ENCODE measurements at regions of chr1 and their contacts with region 1.

Region 1: GRCh38 chr1:236603991-236604904 is at the start of gene HEATR1:
- DNase-seq: peak; percentile 96
- H3K4me3 Mint-ChIP-seq: peak within 1 kb of the TSS; percentile 89
- H3K27ac Mint-ChIP-seq: peak within 1 kb of the TSS; percentile 91
- H3K4me1 Mint-ChIP-seq: peaks cover 9% of the 10 kb centered on the region
- H3K27me3 Mint-ChIP-seq: no peaks in the 10 kb centered on the region
- CTCF ChIP-seq: no peak
- total RNA-seq, gene HEATR1: 70.4 and 75.5 TPM in 2 replicates

Region 2: DNA sequence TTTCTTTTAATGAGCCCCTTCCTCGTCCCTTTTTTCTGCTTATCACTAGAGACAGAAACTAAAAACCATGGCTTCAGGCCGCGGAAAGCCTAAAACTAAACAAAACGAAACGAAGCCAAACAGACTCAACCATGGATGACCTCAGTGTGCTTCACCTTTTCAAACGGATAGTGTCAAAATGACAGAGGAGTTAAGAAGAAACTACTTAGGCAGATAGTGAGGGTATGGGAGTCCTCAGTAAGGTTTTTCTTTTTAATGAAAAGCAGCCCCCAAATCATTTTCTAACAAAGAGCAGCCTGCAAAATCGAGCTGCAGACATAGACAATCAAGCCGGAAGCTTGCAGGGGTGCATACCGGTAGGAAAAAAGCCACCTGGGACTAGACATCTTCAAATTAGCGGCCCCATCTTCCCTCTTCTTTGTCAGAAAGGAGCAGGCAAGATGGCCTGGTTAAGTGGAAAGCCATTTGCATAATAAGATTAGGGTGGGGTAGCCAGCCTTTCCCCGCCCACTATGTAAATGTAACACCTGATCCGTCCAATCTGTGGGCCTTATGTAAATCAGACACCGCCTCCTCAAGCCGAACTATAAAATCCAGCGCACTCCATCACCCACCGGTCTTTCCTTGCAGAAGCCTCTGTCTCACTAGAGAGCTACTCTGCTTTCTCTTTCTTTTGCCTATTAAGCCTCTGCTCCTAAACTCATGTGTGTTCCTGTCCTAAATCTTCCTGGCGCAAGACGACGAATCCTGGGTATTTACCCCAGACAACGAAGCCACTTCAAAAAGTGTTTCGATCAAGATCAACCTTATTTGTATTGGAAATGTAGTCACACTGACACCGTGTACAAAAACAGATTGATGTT is 316.3 kb before region 1 on chr1:
- CTCF ChIA-PET with region 1: no interaction called
- intact Hi-C with region 1: no loop called
- DNase-seq: no peak
- H3K4me3 Mint-ChIP-seq: no peak overlapping the region
- H3K27ac Mint-ChIP-seq: no peak overlapping the region
- H3K4me1 Mint-ChIP-seq: peaks cover 9% of the 10 kb centered on the region
- H3K27me3 Mint-ChIP-seq: peaks cover 48% of the 10 kb centered on the region
- CTCF ChIP-seq: no peak

Region 3: GRCh38 chr1:236568285-236568894 is 35.9 kb before region 1 on chr1:
- CTCF ChIA-PET with region 1: no interaction called
- intact Hi-C with region 1: no loop called
- DNase-seq: no peak
- H3K4me3 Mint-ChIP-seq: no peak overlapping the region
- H3K27ac Mint-ChIP-seq: peak overlapping the region; percentile 3
- H3K4me1 Mint-ChIP-seq: no peaks in the 10 kb centered on the region
- H3K27me3 Mint-ChIP-seq: no peaks in the 10 kb centered on the region
- CTCF ChIP-seq: no peak

Region 4: GRCh38 chr1:236795035-236795756 is 190.9 kb after region 1 on chr1 and contains the start of gene MTR:
- CTCF ChIA-PET with region 1: interaction called, 15 read pairs
- intact Hi-C with region 1: no loop called
- DNase-seq: peak; percentile 99
- H3K4me3 Mint-ChIP-seq: peak within 1 kb of the TSS; percentile 97
- H3K27ac Mint-ChIP-seq: peak within 1 kb of the TSS; percentile 95
- H3K4me1 Mint-ChIP-seq: peaks cover 9% of the 10 kb centered on the region
- H3K27me3 Mint-ChIP-seq: no peaks in the 10 kb centered on the region
- CTCF ChIP-seq: no peak
- total RNA-seq, gene MTR: 30.4 and 37.0 TPM in 2 replicates

Region 5: DNA sequence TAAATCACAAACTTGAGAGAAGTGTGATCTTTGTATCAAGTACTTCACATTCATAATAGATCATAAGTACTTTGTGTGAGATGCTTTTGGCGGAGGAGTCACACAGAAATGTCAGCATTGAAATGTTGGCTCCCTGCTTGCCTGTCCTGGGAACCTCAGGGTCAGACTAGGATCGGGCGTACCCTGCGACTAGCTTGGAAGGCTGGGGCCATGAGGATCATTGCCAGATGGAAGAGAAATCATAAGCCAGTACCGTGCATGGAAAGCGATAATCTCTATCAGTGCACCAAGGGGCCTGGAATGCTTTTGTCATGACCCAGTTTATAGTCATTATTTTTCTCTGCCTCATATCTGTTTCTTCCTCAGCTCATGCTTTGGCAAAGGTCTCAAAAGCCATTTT is 226.3 kb after region 1 on chr1:
- CTCF ChIA-PET with region 1: no interaction called
- intact Hi-C with region 1: no loop called
- DNase-seq: no peak
- H3K4me3 Mint-ChIP-seq: no peak overlapping the region
- H3K27ac Mint-ChIP-seq: no peak overlapping the region
- H3K4me1 Mint-ChIP-seq: no peaks in the 10 kb centered on the region
- H3K27me3 Mint-ChIP-seq: no peaks in the 10 kb centered on the region
- CTCF ChIP-seq: no peak

Region 6: DNA sequence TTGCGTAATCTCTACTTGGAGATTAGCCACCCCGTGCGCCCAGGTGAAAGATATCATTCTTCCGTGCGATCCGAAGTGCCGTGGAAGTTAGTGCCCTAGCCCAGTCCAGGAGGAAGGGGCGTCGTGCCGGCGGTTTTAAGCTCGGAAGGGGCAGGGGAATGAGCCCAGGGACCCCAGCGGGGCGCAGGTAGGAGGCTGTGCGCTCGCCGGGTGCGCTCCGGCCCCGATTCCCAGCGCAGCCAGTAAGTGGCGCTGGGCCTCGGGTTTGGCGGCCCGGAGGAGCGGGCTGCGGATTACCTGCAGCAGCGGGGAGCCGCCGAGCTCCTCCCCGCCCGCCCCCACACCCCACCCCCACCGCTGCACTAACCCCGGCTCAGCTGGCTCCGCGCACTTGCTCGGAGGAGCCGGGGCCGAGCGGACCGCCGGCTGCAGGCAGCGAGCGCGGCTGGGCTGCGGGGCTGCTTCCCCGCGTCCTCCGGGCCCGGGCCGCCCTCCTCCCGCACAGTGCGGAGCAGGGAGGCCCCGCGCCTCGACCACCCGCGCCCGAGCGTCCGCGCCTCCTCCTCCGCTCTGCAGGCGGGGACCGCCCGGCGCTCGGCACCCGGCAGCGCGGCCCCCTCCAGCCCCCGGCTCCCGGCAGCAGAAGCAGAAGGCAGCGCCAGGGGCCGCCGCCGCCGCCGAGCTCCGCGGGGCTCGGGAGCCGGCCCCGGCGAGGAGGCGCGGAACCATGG is 437.7 kb after region 1 on chr1 and contains the start of gene RYR2:
- CTCF ChIA-PET with region 1: no interaction called
- intact Hi-C with region 1: loop called (anchors 5 kb)
- DNase-seq: no peak
- H3K4me3 Mint-ChIP-seq: no peak within 1 kb of the TSS
- H3K27ac Mint-ChIP-seq: no peak within 1 kb of the TSS
- H3K4me1 Mint-ChIP-seq: no peaks in the 10 kb centered on the region
- H3K27me3 Mint-ChIP-seq: no peaks in the 10 kb centered on the region
- CTCF ChIP-seq: no peak
- total RNA-seq, gene RYR2: 0.32 and 0.90 TPM in 2 replicates

Region 7: GRCh38 chr1:237482777-237483176 is 878.5 kb after region 1 on chr1:
- CTCF ChIA-PET with region 1: interaction called, 12 read pairs
- intact Hi-C with region 1: no loop called
- DNase-seq: no peak
- H3K4me3 Mint-ChIP-seq: no peak overlapping the region
- H3K27ac Mint-ChIP-seq: no peak overlapping the region
- H3K4me1 Mint-ChIP-seq: no peaks in the 10 kb centered on the region
- H3K27me3 Mint-ChIP-seq: no peaks in the 10 kb centered on the region
- CTCF ChIP-seq: no peak

Region 8: DNA sequence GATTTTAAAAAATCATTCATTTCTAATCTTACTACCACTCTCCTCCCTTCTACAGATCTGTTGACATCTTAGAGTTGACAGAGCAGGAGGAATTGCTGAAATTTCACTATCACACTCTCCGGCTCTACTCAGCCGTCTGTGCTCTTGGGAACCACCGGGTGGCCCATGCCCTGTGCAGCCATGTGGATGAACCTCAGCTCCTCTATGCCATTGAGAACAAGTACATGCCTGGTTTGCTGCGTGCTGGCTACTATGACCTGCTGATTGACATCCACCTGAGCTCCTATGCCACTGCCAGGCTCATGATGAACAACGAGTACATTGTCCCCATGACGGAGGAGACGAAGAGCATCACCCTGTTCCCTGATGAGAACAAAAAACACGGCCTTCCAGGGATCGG is 1009.7 kb after region 1 on chr1:
- CTCF ChIA-PET with region 1: no interaction called
- intact Hi-C with region 1: no loop called
- DNase-seq: no peak
- H3K4me3 Mint-ChIP-seq: no peak overlapping the region
- H3K27ac Mint-ChIP-seq: no peak overlapping the region
- H3K4me1 Mint-ChIP-seq: no peaks in the 10 kb centered on the region
- H3K27me3 Mint-ChIP-seq: no peaks in the 10 kb centered on the region
- CTCF ChIP-seq: no peak